AG04449 (cell line): ENCODE measurements at regions of chr19 and their contacts with region 1.

Region 1: DNA sequence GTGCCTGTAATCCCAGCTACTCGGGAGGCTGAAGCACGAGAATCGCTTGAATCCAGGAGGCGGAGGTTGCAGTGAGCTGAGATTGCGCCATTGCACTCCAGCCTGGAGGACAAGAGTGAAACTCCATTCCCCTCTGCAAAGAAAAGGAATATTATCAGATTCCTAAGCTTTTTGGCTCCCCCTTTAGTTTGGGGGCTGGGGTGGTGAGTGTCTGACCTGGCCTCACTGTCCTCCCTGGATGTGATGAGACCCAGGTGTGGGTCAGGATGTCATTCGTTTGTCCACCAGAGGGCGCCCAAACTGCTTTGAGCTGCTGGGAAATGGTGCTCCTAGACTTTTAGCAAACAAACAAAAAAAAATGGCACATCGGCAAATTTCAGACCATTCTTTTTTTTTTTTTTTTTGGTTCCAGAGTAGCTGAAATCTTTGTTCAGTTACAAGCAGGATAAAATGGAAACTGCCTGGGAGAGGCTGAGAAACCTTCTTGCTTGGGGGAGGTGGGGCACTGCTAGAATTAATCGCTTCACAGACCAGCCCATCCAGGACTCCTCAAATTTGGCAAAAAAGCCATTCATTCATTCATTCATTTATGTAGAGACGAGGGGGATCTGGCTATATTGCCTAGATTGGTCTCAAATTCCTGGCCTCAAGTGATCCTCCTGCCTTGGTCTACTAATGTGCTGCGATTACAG is 29.4 kb downstream of the SPC24 start:
- DNase-seq: no peak
- H3K4me3 ChIP-seq: no peak overlapping the region
- CTCF ChIP-seq: peak; percentile 78

Region 2: GRCh38 chr19:10987621-10988297 is 138.4 kb before region 1 on chr19:
- CTCF ChIA-PET with region 1: no interaction called
- POLR2A ChIA-PET with region 1: no interaction called
- DNase-seq: no peak
- H3K4me3 ChIP-seq: no peak overlapping the region
- CTCF ChIP-seq: no peak

Region 3: DNA sequence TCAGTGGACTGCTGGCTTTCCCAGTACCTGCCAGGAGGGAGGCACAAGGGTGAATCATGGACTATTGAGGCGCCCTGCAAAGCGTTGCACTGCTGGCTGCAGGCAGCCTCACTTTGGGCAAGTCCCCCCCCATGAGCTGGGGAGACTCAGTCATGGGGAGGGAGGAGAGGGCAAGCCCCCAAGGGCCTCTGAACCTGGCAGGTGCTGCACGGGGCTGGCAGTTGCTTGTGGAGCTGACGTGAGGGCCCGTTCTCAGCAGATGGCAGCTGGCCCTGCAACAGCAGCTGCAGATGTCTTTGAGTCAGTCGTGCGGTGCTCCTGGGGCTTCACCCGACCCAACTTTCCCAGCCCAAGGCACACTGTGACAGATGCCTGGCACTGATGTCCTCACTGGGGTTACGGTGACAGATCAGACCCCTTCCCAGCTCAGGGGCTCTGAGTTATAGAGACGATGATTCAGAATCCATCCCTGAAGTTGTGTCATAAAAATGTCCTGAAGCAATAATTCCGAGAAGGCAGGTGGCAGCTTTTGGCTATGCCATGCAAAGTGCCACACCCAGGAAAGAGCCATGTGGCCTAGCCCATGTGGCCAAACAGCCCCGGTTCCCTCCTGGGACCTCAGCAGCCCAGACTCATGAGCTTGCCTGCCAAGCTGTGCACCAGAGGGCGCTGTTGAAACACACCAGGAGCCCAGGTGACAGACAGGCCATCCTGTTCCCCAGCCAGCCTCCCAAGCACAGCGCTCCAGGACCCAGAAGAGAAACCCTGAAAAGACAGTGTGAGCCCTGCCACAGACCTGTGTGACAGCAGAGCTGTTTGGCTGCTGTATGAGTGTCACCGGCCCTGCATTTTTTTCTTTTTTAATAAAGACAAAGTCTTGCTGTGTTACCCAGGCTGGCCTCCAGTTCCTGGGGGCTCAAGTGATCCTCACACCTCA is 90.4 kb before region 1 on chr19:
- CTCF ChIA-PET with region 1: interaction called, 37 read pairs
- POLR2A ChIA-PET with region 1: no interaction called
- DNase-seq: peak; percentile 19
- H3K4me3 ChIP-seq: no peak overlapping the region
- CTCF ChIP-seq: peak; percentile 94

Region 4: GRCh38 chr19:11096210-11096841 is 29.8 kb before region 1 on chr19:
- CTCF ChIA-PET with region 1: interaction called, 42 read pairs
- POLR2A ChIA-PET with region 1: no interaction called
- DNase-seq: no peak
- H3K4me3 ChIP-seq: no peak overlapping the region
- CTCF ChIP-seq: no peak

Region 5: GRCh38 chr19:11115895-11116446 is 10.2 kb before region 1 on chr19:
- CTCF ChIA-PET with region 1: interaction called, 62 read pairs
- POLR2A ChIA-PET with region 1: no interaction called
- DNase-seq: no peak
- H3K4me3 ChIP-seq: no peak overlapping the region
- CTCF ChIP-seq: no peak

Region 6: GRCh38 chr19:11155373-11156120 is 29.4 kb after region 1 on chr19 and contains the start of gene SPC24:
- CTCF ChIA-PET with region 1: interaction called, 11 read pairs
- POLR2A ChIA-PET with region 1: no interaction called
- DNase-seq: peak; percentile 91
- H3K4me3 ChIP-seq: peak within 1 kb of the TSS; percentile 93
- CTCF ChIP-seq: peak; percentile 3

Region 7: GRCh38 chr19:11197264-11198174 is 71.4 kb after region 1 on chr19 and contains the start of gene KANK2:
- CTCF ChIA-PET with region 1: interaction called, 16 read pairs
- POLR2A ChIA-PET with region 1: no interaction called
- DNase-seq: no peak
- H3K4me3 ChIP-seq: peak within 1 kb of the TSS; percentile 95
- CTCF ChIP-seq: no peak

Region 8: DNA sequence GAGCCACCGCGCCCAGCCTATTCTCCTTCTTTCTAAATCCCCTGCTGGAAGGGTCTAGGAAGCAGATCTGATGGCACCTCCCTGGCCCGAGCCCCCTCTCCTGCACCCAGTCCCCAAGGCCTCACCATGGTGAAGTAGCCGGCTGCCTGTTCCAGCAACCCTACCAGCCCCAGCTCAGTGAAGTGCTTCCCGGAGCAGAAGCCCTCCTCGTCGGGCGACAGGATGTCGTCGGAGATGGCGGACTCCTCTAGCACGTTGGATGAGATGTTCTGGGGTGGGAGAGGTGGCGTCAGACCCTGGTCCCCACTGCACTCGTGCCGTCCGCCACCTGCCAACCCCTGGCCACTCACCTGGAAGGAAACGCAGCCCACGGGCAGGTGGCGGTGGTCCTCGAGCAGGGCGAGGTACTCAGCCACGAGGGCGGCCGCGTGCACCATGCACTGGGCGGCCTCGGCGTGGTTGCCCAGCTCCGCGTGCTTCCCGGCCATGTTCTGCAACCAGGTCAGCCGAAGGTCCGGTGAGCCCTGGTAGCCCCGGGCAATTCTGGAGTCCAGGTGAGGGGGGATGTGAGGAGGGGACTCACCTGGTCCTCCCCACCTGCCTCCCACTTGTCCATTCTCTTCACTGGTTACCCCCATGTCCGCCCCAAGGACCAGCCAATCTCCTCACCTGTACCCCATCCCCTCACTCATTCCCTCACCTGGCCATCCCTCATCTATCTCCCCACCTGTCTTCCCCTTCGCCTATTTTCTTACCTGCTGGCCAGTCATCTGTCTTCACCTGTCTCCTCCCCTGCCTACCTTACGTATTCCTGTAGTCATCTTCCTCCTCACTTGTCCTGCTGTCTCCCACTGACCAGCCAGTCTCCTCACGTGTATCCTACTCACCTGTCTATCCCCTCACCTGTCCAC is 82.7 kb after region 1 on chr19:
- CTCF ChIA-PET with region 1: interaction called, 85 read pairs
- POLR2A ChIA-PET with region 1: no interaction called
- DNase-seq: no peak
- H3K4me3 ChIP-seq: no peak overlapping the region
- CTCF ChIP-seq: no peak